Prostate gland (tissue), 2 donors: ENCODE measurements at regions of chr12 and their contacts with region 1.

Region 1: GRCh38 chr12:110431957-110432587 is 18.1 kb downstream of the ARPC3 start:
- DNase-seq: no peak
- H3K4me3 ChIP-seq: peak overlapping the region; percentile 38 to 43
- H3K27ac ChIP-seq: peak overlapping the region; percentile 53 to 75
- H3K4me1 ChIP-seq: no peaks in the 10 kb centered on the region
- H3K27me3 ChIP-seq: no peaks in the 10 kb centered on the region
- CTCF ChIP-seq: no peak
- POLR2A ChIP-seq: no peak

Region 2: GRCh38 chr12:110100315-110100970 is 331.6 kb before region 1 on chr12:
- intact Hi-C with region 1: loop called (anchors 1 kb)
- DNase-seq: peak; percentile 65
- H3K4me3 ChIP-seq: no peak overlapping the region
- H3K27ac ChIP-seq: peak overlapping the region in 1 of 2 donors; percentile 15
- H3K4me1 ChIP-seq: no peaks in the 10 kb centered on the region
- H3K27me3 ChIP-seq: no peaks in the 10 kb centered on the region
- CTCF ChIP-seq: peak; percentile 64 to 92 (median 88)
- POLR2A ChIP-seq: no peak

Region 3: GRCh38 chr12:110531741-110532333 is 99.8 kb after region 1 on chr12:
- intact Hi-C with region 1: no loop called
- DNase-seq: no peak
- H3K4me3 ChIP-seq: no peak overlapping the region
- H3K27ac ChIP-seq: peak overlapping the region; percentile 0 to 50
- H3K4me1 ChIP-seq: peaks cover 12% of the 10 kb centered on the region
- H3K27me3 ChIP-seq: no peaks in the 10 kb centered on the region
- CTCF ChIP-seq: no peak
- POLR2A ChIP-seq: no peak